ENCODE measurements at regions of chr4 and their contacts with region 1.

Region 1: DNA sequence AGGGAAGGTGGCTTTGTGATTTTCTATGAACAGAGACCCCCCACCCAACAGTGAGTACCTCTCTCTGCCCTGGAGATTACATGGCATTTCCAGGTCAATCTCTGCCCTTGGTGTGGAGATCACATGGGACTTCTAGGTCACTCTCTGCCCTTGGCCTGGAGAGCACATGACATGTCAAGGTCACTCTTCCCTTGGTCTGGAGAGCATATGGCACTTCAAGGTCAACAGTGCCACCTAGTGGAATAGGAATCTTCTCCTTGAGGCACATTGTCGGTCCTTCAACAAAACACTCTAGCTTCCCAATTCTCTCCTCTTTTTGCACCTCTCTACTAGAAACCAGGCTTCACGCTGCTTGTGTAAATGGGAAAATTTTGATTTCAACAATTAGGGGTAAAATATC is 66.2 kb upstream of the TACR3 start:
- DNase-seq: peak; percentile 59
- H3K4me3 ChIP-seq: no peak overlapping the region
- H3K27ac ChIP-seq: no peak overlapping the region
- H3K4me1 ChIP-seq: no peaks in the 10 kb centered on the region
- CTCF ChIP-seq: peak; percentile 82

Region 2: DNA sequence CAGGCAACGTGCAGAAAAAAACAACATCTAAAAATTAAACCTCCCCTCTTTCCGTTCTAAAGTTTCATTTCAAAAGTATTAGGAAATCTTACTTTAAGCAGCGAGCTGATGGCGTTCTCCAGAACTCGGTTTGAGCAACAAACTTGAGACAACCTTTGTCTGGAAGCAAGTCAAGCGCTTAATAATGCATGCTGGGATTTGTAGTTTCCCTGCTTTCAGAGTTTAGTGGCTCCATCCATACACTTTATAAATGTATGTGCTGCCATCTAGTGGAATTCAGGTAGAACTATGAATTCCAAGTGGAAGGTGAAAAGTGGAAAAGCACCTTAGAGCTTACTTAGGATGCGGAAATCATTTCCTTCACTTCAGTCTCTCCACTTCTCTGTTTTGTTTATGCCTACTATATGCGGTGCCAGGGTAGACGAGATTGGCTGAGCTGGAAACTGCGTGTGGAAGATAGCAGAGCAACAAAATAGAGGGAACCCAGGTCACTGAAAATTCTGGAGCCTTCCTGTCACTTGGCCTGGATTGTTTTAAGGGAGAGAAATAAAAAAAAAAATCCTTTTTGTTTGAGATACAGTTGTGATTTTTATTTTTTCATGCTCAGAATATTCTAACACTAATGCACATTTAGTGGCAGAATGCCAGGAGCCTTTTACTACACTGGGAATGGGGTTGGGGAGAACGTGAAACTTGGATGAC is 686.2 kb before region 1 on chr4 and contains the start of gene BDH2:
- CTCF ChIA-PET with region 1: no interaction called
- POLR2A ChIA-PET with region 1: no interaction called
- intact Hi-C with region 1: loop called (anchors 10 kb)
- DNase-seq: peak; percentile 94
- H3K4me3 ChIP-seq: peak within 1 kb of the TSS; percentile 69
- H3K27ac ChIP-seq: no peak within 1 kb of the TSS
- H3K4me1 ChIP-seq: peaks cover 8% of the 10 kb centered on the region
- CTCF ChIP-seq: peak; percentile 90
- total RNA-seq, gene BDH2: 28.2 and 35.2 TPM in 2 replicates

Region 3: GRCh38 chr4:103207673-103208072 is 578.3 kb before region 1 on chr4:
- CTCF ChIA-PET with region 1: no interaction called
- POLR2A ChIA-PET with region 1: no interaction called
- intact Hi-C with region 1: loop called (anchors 2 kb)
- DNase-seq: no peak
- H3K4me3 ChIP-seq: no peak overlapping the region
- H3K27ac ChIP-seq: no peak overlapping the region
- H3K4me1 ChIP-seq: no peaks in the 10 kb centered on the region
- CTCF ChIP-seq: peak; percentile 42

Measured in OCI-LY7 (cell line).